A673 (cell line): ENCODE measurements at regions of chr2 and their contacts with region 1.

Region 1: DNA sequence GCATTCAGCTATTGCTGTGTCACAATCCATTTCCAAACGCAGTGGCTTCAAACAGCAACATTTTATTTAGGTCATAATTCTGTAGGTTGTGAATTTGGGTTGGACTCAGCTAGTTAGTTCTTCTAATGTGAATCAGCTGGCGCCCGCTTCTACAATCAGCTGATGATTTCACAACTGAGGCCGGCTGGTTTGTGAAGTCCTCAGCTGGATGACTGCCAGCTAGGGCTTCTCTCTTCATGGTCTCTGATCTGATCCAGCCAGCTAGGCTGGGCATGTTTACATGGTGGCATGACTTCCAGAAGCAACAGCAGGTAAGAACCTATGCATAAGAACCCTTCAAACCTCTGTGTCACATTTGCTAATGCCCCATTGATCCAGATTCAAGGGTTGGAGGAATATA is 172.0 kb downstream of the SLC4A10 start:
- DNase-seq: peak; percentile 30
- H3K4me3 ChIP-seq: no peak overlapping the region
- H3K27ac ChIP-seq: no peak overlapping the region
- H3K4me1 ChIP-seq: no peaks in the 10 kb centered on the region
- H3K27me3 ChIP-seq: no peaks in the 10 kb centered on the region
- CTCF ChIP-seq: no peak

Region 2: GRCh38 chr2:161839926-161840325 is 43.7 kb after region 1 on chr2:
- CTCF ChIA-PET with region 1: no interaction called
- POLR2A ChIA-PET with region 1: no interaction called
- intact Hi-C with region 1: loop called (anchors 2 kb)
- DNase-seq: no peak
- H3K4me3 ChIP-seq: no peak overlapping the region
- H3K27ac ChIP-seq: no peak overlapping the region
- H3K4me1 ChIP-seq: peaks cover under 1% of the 10 kb centered on the region
- H3K27me3 ChIP-seq: no peaks in the 10 kb centered on the region
- CTCF ChIP-seq: no peak